ENCODE measurements at regions of chr10 and their contacts with region 1.

Region 1: GRCh38 chr10:100934084-100934659 is 21.4 kb downstream of the SLF2 start:
- DNase-seq: no peak
- H3K4me3 ChIP-seq: no peak overlapping the region
- H3K27ac ChIP-seq: no peak overlapping the region
- H3K4me1 ChIP-seq: no peaks in the 10 kb centered on the region
- H3K27me3 ChIP-seq: no peaks in the 10 kb centered on the region
- CTCF ChIP-seq: peak; percentile 9 to 37 (median 34)
- POLR2A ChIP-seq: no peak

Region 2: DNA sequence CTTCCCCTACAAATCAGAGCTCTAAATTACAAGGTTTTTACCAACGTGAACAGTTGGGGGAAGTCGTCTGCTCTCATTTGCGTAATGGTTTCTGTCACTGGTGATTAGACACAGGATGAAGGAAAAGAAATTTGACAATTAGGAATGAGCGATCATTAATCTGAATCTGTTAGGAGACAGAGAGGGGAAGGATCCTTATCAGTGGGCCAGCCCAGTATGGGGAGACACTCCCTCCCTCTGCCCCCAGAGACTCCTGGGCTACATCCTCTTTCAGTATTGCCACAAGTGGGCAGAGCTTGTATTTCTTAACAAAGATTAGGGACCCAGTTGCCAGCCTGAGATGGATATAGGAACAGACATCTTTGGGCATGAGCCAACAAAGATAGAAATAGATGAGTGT is 383.0 kb before region 1 on chr10:
- intact Hi-C with region 1: no loop called
- DNase-seq: no peak
- H3K4me3 ChIP-seq: no peak overlapping the region
- H3K27ac ChIP-seq: no peak overlapping the region
- H3K4me1 ChIP-seq: no peaks in the 10 kb centered on the region
- H3K27me3 ChIP-seq: no peaks in the 10 kb centered on the region
- CTCF ChIP-seq: no peak
- POLR2A ChIP-seq: no peak

Region 3: DNA sequence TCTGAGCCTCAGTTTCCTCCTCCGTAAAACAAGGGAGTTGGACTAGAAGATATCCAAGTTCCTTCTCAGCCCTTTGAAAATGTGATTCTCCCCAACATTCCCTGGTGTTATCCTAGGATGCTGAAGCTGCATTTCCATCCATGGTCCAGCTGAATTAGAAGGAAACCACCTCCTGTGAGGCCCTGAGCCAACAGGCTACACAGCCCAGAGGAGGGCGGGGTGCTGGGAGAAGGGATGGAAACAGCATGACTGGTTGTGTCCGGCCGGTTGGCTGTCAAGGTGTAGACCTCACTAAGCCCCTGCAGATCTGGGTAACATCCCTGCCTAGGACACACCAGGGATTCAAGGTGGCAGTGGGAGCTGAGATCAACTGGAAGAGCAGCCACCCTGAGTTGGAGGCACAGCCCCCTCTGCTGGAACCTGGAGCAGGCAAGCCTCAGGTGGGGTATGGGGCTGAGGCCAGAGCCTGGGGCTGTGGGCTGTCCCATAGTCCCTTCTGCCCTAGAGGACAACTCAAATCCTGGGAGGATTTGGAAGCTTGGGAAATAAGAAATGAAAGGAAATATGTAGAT is 116.8 kb before region 1 on chr10:
- intact Hi-C with region 1: no loop called
- DNase-seq: peak in 1 of 7 donors; percentile 13
- H3K4me3 ChIP-seq: no peak overlapping the region
- H3K27ac ChIP-seq: no peak overlapping the region
- H3K4me1 ChIP-seq: no peaks in the 10 kb centered on the region
- H3K27me3 ChIP-seq: peaks cover 19% of the 10 kb centered on the region
- CTCF ChIP-seq: no peak
- POLR2A ChIP-seq: no peak

Region 4: GRCh38 chr10:100998991-100999741 is 65.0 kb after region 1 on chr10:
- intact Hi-C with region 1: no loop called
- DNase-seq: peak; percentile 77 to 89 (median 84)
- H3K4me3 ChIP-seq: peak overlapping the region in 3 of 4 donors; percentile 53 to 86 (median 84)
- H3K27ac ChIP-seq: peak overlapping the region; percentile 97 to 100 (median 100)
- H3K4me1 ChIP-seq: peaks cover 24 to 39% of the 10 kb centered on the region in 2 donors
- H3K27me3 ChIP-seq: no peaks in the 10 kb centered on the region
- CTCF ChIP-seq: peak; percentile 82 to 99 (median 94)
- POLR2A ChIP-seq: peak; percentile 81 to 87

Region 5: DNA sequence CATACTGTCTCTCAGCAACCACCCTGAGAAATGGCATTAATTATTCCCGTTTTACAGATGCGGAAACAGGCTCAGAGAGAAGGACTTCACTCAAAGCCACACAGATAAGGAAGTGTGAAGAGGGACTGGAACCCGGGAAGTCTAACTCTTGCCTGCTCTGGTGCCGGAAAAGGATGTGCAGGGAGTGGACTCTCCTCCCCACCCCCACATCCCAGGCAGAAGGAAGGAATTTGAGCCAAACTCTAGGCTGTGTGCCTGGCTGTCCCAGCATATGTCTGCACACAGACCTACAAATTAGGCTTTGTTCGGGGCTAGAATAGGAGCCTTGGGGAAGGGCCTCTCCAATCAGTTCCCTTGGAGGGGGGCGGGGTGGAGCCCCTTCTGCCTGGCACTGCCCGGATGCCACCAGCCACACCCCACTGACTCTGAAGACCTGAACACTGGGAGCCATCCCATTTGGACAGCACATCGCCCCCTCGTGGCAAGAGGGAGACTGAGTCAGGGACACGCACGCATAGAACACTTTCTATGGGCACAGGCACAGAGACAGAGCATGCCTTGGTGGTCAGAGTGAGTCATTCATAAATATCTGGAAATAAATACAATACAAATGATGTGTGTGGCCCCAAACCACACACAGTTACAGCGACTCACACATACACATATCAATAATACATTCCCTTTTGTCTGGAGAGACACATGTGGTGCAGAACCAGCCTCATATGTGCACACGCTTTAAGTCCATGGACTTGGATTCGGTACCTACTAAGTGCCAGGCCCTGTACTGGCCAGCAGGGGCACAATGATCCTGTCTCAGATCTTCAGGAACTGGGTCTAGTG is 78.6 kb after region 1 on chr10:
- intact Hi-C with region 1: no loop called
- DNase-seq: peak; percentile 89 to 95 (median 93)
- H3K4me3 ChIP-seq: no peak overlapping the region
- H3K27ac ChIP-seq: peak overlapping the region in 2 of 5 donors; percentile 50 to 56
- H3K4me1 ChIP-seq: peaks cover 0 to 10% of the 10 kb centered on the region in 2 donors
- H3K27me3 ChIP-seq: no peaks in the 10 kb centered on the region
- CTCF ChIP-seq: peak; percentile 79 to 99 (median 92)
- POLR2A ChIP-seq: no peak

Region 6: GRCh38 chr10:101818119-101818871 is 884.1 kb after region 1 on chr10 and contains the start of gene OGA:
- intact Hi-C with region 1: loop called in 1 of 2 experiments (anchors 10 kb)
- DNase-seq: peak; percentile 98 to 100 (median 99)
- H3K4me3 ChIP-seq: peak within 1 kb of the TSS; percentile 38 to 94 (median 75)
- H3K27ac ChIP-seq: peak within 1 kb of the TSS; percentile 31 to 96 (median 90)
- H3K4me1 ChIP-seq: peaks cover 25 to 36% of the 10 kb centered on the region in 2 donors
- H3K27me3 ChIP-seq: no peaks in the 10 kb centered on the region
- CTCF ChIP-seq: no peak
- POLR2A ChIP-seq: peak; percentile 83 to 98
- total RNA-seq, gene OGA: 32.8 to 119 (median 76.6) TPM